Activated CD4-positive, alpha-beta memory T cell treated with anti-CD3 and anti-CD28 coated beads, Interleukin-2, amount 10 ng/mL, durations not matched to agents 7 days and 5 days (primary cell): ENCODE measurements at regions of chr11 and their contacts with region 1.

Region 1: GRCh38 chr11:10540923-10541560 is at the start of gene RNF141:
- DNase-seq: peak; percentile 95
- H3K4me3 Mint-ChIP-seq: peak within 1 kb of the TSS; percentile 86
- H3K27ac Mint-ChIP-seq: peak within 1 kb of the TSS; percentile 61
- H3K4me1 Mint-ChIP-seq: peaks cover 17% of the 10 kb centered on the region
- H3K27me3 Mint-ChIP-seq: peaks cover 3% of the 10 kb centered on the region
- total RNA-seq, gene RNF141: 12.2 to 12.3 TPM

Region 2: DNA sequence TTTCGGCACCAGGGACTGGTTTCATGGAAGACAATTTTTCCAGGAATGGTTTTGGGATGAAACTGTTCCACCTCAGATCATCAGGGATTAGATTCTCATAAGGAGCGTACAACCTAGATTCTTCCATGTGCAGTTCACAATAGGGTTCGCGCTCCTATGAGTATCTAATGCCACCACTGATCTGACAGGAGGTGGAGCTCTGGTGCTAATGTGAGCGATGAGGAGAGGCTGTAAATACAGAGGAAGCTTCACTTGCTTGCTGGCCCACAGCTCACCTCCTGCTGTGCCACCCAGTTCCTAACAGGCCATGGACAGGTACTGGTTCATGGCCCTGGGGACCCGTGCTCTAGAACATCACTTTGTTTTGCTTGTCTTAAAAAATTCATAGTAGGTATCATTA is 127.8 kb before region 1 on chr11:
- CTCF ChIA-PET with region 1: interaction called, 53 read pairs
- POLR2A ChIA-PET with region 1: interaction called, 13 read pairs
- DNase-seq: peak; percentile 64
- H3K4me3 Mint-ChIP-seq: no peak overlapping the region
- H3K27ac Mint-ChIP-seq: no peak overlapping the region
- H3K4me1 Mint-ChIP-seq: peaks cover 49% of the 10 kb centered on the region
- H3K27me3 Mint-ChIP-seq: peaks cover 10% of the 10 kb centered on the region

Region 3: GRCh38 chr11:10518891-10519290 is 22.2 kb before region 1 on chr11:
- CTCF ChIA-PET with region 1: interaction called, 30 read pairs
- POLR2A ChIA-PET with region 1: interaction called, 6 read pairs
- DNase-seq: no peak
- H3K4me3 Mint-ChIP-seq: no peak overlapping the region
- H3K27ac Mint-ChIP-seq: no peak overlapping the region
- H3K4me1 Mint-ChIP-seq: no peaks in the 10 kb centered on the region
- H3K27me3 Mint-ChIP-seq: no peaks in the 10 kb centered on the region

Region 4: GRCh38 chr11:10573556-10573955 is 32.5 kb after region 1 on chr11:
- CTCF ChIA-PET with region 1: interaction called, 10 read pairs
- POLR2A ChIA-PET with region 1: no interaction called
- DNase-seq: no peak
- H3K4me3 Mint-ChIP-seq: no peak overlapping the region
- H3K27ac Mint-ChIP-seq: no peak overlapping the region
- H3K4me1 Mint-ChIP-seq: no peaks in the 10 kb centered on the region
- H3K27me3 Mint-ChIP-seq: peaks cover 25% of the 10 kb centered on the region

Region 5: GRCh38 chr11:10606536-10607208 is 65.6 kb after region 1 on chr11:
- CTCF ChIA-PET with region 1: interaction called, 10 read pairs
- POLR2A ChIA-PET with region 1: interaction called, 8 read pairs
- DNase-seq: no peak
- H3K4me3 Mint-ChIP-seq: no peak overlapping the region
- H3K27ac Mint-ChIP-seq: no peak overlapping the region
- H3K4me1 Mint-ChIP-seq: peaks cover 30% of the 10 kb centered on the region
- H3K27me3 Mint-ChIP-seq: peaks cover 22% of the 10 kb centered on the region